Naive thymus-derived CD4-positive, alpha-beta T cell (primary cell): ENCODE measurements at regions of chr2 and their contacts with region 1.

Region 1: DNA sequence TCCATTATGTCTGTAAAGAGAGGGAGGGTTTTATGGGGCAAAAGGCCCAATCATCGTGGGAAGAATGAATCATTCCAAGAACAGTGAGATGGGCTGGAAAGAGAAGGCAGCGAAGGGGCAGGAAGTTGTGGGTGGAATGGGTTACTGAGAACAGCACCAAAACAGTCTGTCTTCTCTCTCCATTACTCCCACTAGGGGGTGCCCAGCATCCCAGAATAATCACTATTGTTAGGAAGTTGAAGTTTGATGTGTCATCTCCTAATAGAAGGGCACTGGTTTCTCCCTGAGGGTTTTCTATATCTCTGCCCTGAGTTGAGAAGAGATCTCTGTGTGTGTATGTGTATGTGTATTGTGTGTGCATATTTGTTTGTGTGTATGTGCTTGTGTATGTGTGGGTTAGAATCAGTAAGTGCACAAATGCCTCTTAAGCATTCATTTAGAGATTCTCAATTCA is 76.6 kb upstream of the MAP4K3 start:
- DNase-seq: peak in 1 of 9 donors; percentile 70
- ATAC-seq: peak; percentile 66
- H3K4me3 ChIP-seq: no peak overlapping the region
- H3K4me3 Mint-ChIP-seq: peak overlapping the region in 1 of 10 donors; percentile 11
- H3K27ac ChIP-seq: no peak overlapping the region
- H3K27ac Mint-ChIP-seq: peak overlapping the region in 1 of 9 donors; percentile 8
- H3K4me1 ChIP-seq: no peaks in the 10 kb centered on the region
- H3K4me1 Mint-ChIP-seq: peaks cover 0 to 26% (median 9%) of the 10 kb centered on the region in 7 donors
- H3K27me3 ChIP-seq: no peaks in the 10 kb centered on the region
- H3K27me3 Mint-ChIP-seq: no peaks in the 10 kb centered on the region

Region 2: DNA sequence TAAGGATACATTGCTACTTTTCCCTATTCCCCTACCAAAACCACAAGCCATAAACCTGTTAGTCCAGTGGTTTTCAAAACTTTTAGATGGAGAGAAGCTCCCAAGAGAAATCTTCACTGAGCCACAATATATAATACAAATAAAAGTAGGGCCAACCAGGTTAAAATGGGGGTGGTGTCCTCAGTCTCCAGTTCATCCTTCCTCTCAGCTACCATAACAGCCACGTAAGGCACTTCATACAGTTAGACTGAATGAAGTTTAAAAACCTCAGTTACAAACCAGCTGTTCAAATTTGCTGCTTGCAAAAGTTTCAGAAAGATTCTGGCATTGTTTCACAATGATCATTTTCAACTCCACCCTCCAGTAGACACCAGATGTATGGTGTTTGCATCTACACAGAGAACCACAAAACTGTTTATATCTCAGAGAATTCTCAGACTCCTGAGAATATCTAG is 418.8 kb before region 1 on chr2:
- CTCF ChIA-PET with region 1: no interaction called
- POLR2A ChIA-PET with region 1: no interaction called
- intact Hi-C with region 1: no loop called
- DNase-seq: no peak
- ATAC-seq: peak; percentile 20
- H3K4me3 ChIP-seq: no peak overlapping the region
- H3K4me3 Mint-ChIP-seq: peak overlapping the region in 2 of 10 donors; percentile 11 to 31
- H3K27ac ChIP-seq: no peak overlapping the region
- H3K27ac Mint-ChIP-seq: peak overlapping the region in 5 of 9 donors; percentile 5 to 89 (median 68)
- H3K4me1 ChIP-seq: peaks cover 0 to 13% of the 10 kb centered on the region in 2 donors
- H3K4me1 Mint-ChIP-seq: peaks cover 44 to 71% (median 62%) of the 10 kb centered on the region in 7 donors
- H3K27me3 ChIP-seq: no peaks in the 10 kb centered on the region
- H3K27me3 Mint-ChIP-seq: no peaks in the 10 kb centered on the region

Region 3: GRCh38 chr2:39492095-39492590 is 21.5 kb before region 1 on chr2:
- CTCF ChIA-PET with region 1: no interaction called
- POLR2A ChIA-PET with region 1: no interaction called
- intact Hi-C with region 1: loop called in 1 of 2 experiments (anchors 1 kb)
- DNase-seq: no peak
- ATAC-seq: peak; percentile 90
- H3K4me3 ChIP-seq: no peak overlapping the region
- H3K4me3 Mint-ChIP-seq: peak overlapping the region in 1 of 10 donors; percentile 45
- H3K27ac ChIP-seq: no peak overlapping the region
- H3K27ac Mint-ChIP-seq: peak overlapping the region in 1 of 9 donors; percentile 66
- H3K4me1 ChIP-seq: no peaks in the 10 kb centered on the region
- H3K4me1 Mint-ChIP-seq: peaks cover 0 to 25% (median 0%) of the 10 kb centered on the region in 7 donors
- H3K27me3 ChIP-seq: no peaks in the 10 kb centered on the region
- H3K27me3 Mint-ChIP-seq: peaks cover 0 to 4% (median 0%) of the 10 kb centered on the region in 5 donors

Region 4: GRCh38 chr2:39728941-39729351 is 215.3 kb after region 1 on chr2:
- CTCF ChIA-PET with region 1: no interaction called
- POLR2A ChIA-PET with region 1: no interaction called
- intact Hi-C with region 1: loop called in 1 of 2 experiments (anchors 5 kb)
- DNase-seq: no peak
- ATAC-seq: peak; percentile 60
- H3K4me3 ChIP-seq: no peak overlapping the region
- H3K4me3 Mint-ChIP-seq: no peak overlapping the region
- H3K27ac ChIP-seq: no peak overlapping the region
- H3K27ac Mint-ChIP-seq: no peak overlapping the region
- H3K4me1 ChIP-seq: no peaks in the 10 kb centered on the region
- H3K4me1 Mint-ChIP-seq: peaks cover 0 to 10% (median 0%) of the 10 kb centered on the region in 7 donors
- H3K27me3 ChIP-seq: no peaks in the 10 kb centered on the region
- H3K27me3 Mint-ChIP-seq: no peaks in the 10 kb centered on the region

Region 5: DNA sequence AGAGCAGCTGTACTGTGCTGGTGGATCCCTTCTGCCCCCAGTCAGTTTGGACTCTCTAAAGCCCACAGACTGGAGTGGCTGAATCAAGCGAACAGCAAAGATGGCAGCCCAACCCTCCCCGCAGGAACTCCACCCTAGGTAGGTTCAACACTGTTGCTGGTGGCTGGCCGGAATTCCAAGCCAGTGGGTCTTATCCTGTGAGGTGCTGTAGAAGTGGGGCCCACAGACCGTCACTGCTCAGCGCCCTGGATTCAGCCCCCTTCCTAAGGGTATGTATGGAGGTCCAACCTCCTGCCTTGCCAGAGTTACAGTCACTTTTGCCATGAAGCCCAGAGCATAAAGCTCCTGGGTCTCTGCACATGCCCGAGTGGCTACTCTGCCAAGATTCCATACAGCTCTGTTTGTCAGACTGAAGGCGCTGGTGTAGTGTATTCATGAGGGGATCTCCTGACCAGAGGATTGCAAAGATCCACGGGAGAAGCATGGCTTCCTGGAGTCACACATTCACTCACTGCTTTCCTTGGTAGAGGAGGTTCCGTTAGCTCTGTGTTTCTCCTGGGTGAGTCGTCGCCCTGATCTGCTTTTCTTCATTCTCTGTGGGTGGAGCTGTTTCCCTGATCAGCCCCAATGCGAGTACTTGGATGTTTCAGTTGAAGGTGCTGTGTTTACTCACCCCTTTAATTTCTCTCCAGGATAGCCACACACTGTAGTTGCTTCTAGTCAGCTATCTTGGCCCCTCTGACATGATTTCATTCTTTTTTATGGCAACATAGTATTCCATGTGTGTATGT is 559.0 kb after region 1 on chr2:
- CTCF ChIA-PET with region 1: no interaction called
- POLR2A ChIA-PET with region 1: no interaction called
- intact Hi-C with region 1: no loop called
- DNase-seq: no peak
- ATAC-seq: no peak
- H3K4me3 ChIP-seq: no peak overlapping the region
- H3K4me3 Mint-ChIP-seq: no peak overlapping the region
- H3K27ac ChIP-seq: no peak overlapping the region
- H3K27ac Mint-ChIP-seq: no peak overlapping the region
- H3K4me1 ChIP-seq: no peaks in the 10 kb centered on the region
- H3K4me1 Mint-ChIP-seq: no peaks in the 10 kb centered on the region
- H3K27me3 ChIP-seq: no peaks in the 10 kb centered on the region
- H3K27me3 Mint-ChIP-seq: no peaks in the 10 kb centered on the region